Sciatic nerve (tissue), 2 donors: ENCODE measurements at regions of chr12 and their contacts with region 1.

Region 1: DNA sequence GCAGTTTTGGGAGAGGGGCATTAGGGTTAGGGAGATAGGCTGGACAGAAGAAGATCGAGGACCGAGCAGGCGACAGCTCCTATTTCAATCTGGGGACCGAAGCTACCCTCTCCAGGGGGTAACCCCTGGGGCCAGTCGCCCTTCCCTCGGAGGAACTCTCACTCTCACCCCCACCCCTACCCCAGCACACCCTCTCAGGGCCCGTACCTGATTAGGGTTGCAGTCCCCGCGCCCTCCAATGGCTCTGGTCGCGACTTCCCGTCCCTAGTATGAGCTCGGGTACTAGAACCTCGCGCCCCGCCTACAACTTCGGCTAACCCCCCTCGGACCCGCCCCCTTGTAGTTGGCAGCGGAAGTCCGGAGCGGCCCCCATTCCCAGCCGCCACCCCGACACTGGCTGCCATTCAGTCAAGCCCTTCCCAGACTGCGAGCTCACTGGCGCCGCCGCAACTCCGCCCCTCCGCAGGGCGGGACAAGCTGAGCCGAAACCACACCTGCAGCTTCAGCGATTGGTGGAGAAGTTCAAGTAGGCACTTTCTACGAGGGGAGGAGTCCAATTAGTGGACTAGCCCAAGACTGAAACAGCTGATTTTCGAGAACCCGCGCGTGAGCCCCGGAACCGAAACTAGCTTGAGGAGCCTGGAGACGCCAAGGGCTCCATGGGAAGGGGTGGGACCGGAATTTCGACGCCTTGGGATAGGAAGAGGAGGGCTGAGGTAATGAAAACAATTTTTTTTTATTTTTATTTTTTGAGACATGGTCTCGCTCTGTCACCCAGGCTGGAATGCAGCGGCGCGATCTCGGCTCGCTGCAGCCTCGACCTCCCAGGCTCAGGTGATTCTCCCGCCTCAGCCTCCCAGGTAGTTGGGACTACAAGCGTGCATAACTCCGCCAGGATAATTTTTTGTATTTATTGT is at the start of gene STAT2:
- DNase-seq: peak; percentile 99
- ATAC-seq: peak; percentile 98
- total RNA-seq, gene STAT2: 195 TPM

Region 2: DNA sequence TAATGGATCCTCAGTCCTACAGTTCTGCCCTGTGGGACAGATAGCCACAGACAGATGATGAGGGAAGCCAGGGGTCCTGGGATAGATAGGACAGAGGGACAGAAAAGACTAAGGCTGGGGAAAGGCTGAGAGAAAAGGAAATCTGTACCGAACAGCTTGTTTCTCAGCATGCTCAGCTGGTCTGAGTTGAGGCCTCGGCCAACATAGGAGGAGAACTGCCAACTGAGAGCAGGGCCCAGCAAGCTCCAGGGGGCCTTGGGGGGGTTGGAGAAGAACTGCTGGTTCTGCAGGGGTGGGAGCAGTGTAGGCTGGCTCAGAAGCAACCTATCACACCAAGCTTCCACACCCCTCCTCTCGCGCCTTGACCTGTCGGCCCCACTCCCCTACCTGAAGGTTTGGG is 11.3 kb before region 1 on chr12:
- intact Hi-C with region 1: loop called (anchors 1 kb)
- DNase-seq: no peak
- ATAC-seq: no peak

Region 3: DNA sequence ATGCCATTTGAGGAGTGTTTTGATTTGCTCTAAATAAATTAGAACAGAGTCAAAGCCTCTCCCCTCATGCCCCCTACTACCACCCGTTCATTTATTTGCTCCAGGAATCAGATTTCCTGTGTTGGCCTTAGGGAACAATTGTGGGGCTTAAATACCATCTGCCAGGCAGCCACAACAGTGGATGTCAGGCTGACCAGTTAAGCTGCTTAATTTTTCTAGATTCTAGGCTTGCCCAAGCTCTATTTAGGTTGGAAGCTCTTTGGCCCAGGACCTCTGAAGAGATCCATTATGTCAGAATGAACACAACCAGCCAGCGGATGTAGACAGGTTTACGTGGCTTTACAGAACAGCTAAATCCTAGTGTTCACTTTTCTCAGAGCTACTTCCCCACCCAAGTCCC is 90.1 kb after region 1 on chr12:
- intact Hi-C with region 1: loop called (anchors 10 kb)
- DNase-seq: no peak
- ATAC-seq: no peak

Region 4: DNA sequence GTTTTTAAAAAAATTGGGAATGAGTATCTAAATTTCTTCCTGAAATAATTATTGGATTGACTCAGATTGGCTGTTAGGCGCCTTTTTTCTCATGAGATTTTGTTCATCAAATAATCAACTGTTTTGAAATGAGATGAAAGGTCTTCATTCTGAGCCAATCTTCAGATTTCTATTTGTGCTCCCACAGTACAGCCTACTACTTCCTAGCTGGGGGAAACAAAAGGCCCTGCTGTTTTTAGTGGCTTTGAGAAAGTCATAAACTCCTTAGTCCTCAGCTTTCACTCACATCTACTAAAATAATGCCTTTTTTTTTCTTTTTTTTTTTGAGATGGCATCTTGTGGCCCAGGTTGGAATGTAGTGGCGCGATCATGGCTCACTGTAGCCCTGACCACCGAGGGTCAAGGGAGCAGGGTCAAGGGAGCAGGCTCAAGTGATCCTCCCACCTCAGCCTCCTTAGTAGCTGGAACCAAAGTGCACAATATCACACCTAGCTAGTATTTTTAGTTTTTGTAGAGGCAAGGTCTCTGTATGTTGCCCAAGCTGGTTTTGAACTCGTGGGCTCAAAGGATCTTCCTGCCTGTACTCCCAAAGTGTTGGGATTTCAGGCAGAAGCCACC is 349.8 kb after region 1 on chr12:
- intact Hi-C with region 1: no loop called
- DNase-seq: no peak
- ATAC-seq: peak; percentile 20